ENCODE measurements at regions of chr7 and their contacts with region 1.

Region 1: GRCh38 chr7:116862234-116862950 is at the start of gene CAPZA2:
- DNase-seq: peak; percentile 91 to 96
- ATAC-seq: peak; percentile 94 to 99 (median 98)
- H3K4me3 ChIP-seq: peak within 1 kb of the TSS; percentile 71 to 95 (median 84)
- H3K27ac ChIP-seq: peak within 1 kb of the TSS; percentile 97 to 100 (median 99)
- H3K4me1 ChIP-seq: peaks cover 0 to 53% (median 38%) of the 10 kb centered on the region in 9 donors
- H3K27me3 ChIP-seq: no peaks in the 10 kb centered on the region
- CTCF ChIP-seq: peak in 7 of 9 donors; percentile 11 to 62 (median 38)
- total RNA-seq, gene CAPZA2: 285 to 416 (median 345) TPM

Region 2: DNA sequence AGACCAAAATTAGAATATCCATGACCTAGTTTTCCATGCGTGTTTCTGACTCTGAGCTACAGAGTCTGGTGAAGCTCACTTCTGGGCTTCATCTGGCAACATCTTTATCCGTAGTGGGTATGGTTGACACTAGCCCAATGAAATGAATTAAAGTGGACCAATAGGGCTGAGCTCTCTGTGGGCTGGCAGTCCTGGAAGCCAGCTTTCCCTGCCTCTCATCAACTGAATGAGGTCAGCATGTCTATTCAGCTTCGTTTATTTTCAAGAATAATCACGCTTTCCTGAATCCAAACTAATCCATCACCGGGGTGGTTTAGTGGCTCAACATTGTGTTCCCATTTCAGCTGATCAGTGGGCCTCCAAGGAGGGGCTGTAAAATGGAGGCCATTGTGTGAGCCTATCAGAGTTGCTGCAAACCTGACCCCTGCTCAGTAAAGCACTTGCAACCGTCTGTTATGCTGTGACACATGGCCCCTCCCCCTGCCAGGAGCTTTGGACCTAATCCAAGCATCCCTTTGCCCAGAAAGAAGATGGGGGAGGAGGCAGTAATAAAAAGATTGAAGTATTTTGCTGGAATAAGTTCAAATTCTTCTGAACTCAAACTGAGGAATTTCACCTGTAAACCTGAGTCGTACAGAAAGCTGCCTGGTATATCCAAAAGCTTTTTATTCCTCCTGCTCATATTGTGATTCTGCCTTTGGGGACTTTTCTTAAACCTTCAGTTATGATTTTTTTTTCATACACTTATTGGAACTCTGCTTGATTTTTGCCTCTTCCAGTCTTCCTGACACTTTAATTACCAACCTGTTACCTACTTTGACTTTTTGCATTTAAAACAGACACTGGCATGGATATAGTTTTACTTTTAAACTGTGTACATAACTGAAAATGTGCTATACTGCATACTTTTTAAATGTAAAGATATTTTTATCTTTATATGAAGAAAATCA is 302.1 kb before region 1 on chr7:
- intact Hi-C with region 1: no loop called
- DNase-seq: peak in 1 of 2 donors; percentile 39
- ATAC-seq: peak; percentile 62 to 92 (median 85)
- H3K4me3 ChIP-seq: no peak overlapping the region
- H3K27ac ChIP-seq: peak overlapping the region; percentile 4 to 82 (median 70)
- H3K4me1 ChIP-seq: peaks cover 2 to 70% (median 42%) of the 10 kb centered on the region in 9 donors
- H3K27me3 ChIP-seq: no peaks in the 10 kb centered on the region
- CTCF ChIP-seq: no peak

Region 3: GRCh38 chr7:116911801-116912200 is 49.4 kb after region 1 on chr7:
- intact Hi-C with region 1: loop called in 1 of 10 experiments (anchors 10 kb)
- DNase-seq: no peak
- ATAC-seq: no peak
- H3K4me3 ChIP-seq: no peak overlapping the region
- H3K27ac ChIP-seq: no peak overlapping the region
- H3K4me1 ChIP-seq: peaks cover 0 to 16% (median 0%) of the 10 kb centered on the region in 9 donors
- H3K27me3 ChIP-seq: no peaks in the 10 kb centered on the region
- CTCF ChIP-seq: no peak

Region 4: GRCh38 chr7:116953727-116954442 is 91.5 kb after region 1 on chr7:
- intact Hi-C with region 1: loop called in 1 of 10 experiments (anchors 5 kb)
- DNase-seq: peak; percentile 59 to 70
- ATAC-seq: peak; percentile 59 to 80 (median 70)
- H3K4me3 ChIP-seq: peak overlapping the region; percentile 77 to 95 (median 84)
- H3K27ac ChIP-seq: peak overlapping the region; percentile 98 to 100 (median 99)
- H3K4me1 ChIP-seq: peaks cover 0 to 48% (median 35%) of the 10 kb centered on the region in 9 donors
- H3K27me3 ChIP-seq: no peaks in the 10 kb centered on the region
- CTCF ChIP-seq: no peak